Activated naive CD4-positive, alpha-beta T cell treated with anti-CD3 and anti-CD28 coated beads, Interleukin-2, amount 10 ng/mL, durations not matched to agents 7 days and 5 days (primary cell): ENCODE measurements at regions of chr2 and their contacts with region 1.

Region 1: DNA sequence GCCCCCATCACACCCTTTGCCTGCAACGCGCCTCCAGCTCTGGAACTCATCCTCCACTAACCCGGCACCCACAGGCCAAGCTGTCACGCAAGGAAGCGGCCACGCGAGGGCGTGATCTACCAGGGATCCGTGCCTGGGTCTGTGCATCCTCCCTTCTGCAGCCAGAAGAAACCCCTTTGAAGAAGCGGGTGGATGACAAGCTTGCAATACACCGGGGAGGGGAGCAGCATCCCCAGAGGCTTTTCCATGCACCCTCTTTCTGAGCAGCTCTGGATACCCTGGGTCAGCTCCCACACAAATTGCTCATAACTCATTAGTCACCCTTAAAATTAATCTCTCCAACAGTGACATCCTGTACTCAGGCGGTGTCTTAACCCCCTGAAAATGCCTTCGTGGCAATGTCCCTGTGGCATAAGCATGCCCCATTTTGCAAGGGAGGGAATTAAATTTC is 47.6 kb downstream of the PDCL3 start:
- DNase-seq: peak; percentile 89
- H3K4me3 Mint-ChIP-seq: no peak overlapping the region
- H3K27ac Mint-ChIP-seq: no peak overlapping the region
- H3K4me1 Mint-ChIP-seq: peaks cover 4% of the 10 kb centered on the region
- H3K27me3 Mint-ChIP-seq: peaks cover 36% of the 10 kb centered on the region

Region 2: DNA sequence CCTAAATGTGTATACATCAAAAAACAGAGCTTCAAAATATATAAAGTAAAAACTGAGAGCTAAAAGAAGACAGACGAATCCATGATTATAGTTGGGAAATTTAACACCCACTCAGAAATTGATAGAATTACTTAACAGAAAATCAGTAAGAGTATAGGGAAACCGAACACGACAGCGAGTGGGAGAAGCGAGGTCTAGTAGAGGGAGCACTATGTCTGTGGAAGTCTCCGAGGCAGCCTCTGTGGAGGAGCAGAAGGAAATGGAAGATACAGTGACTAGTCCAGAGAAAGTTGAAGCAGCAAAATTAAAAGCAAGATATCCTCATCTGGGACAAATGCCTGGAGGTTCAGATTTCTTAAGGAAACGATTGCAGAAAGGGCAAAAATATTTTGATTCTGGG is 101.3 kb before region 1 on chr2:
- CTCF ChIA-PET with region 1: no interaction called
- DNase-seq: no peak
- H3K4me3 Mint-ChIP-seq: no peak overlapping the region
- H3K27ac Mint-ChIP-seq: no peak overlapping the region
- H3K4me1 Mint-ChIP-seq: no peaks in the 10 kb centered on the region
- H3K27me3 Mint-ChIP-seq: peaks cover 4% of the 10 kb centered on the region

Region 3: GRCh38 chr2:100592226-100592625 is 18.2 kb before region 1 on chr2:
- CTCF ChIA-PET with region 1: interaction called, 13 read pairs
- DNase-seq: no peak
- H3K4me3 Mint-ChIP-seq: no peak overlapping the region
- H3K27ac Mint-ChIP-seq: no peak overlapping the region
- H3K4me1 Mint-ChIP-seq: peaks cover 43% of the 10 kb centered on the region
- H3K27me3 Mint-ChIP-seq: peaks cover 20% of the 10 kb centered on the region

Region 4: GRCh38 chr2:100630473-100630977 is 20.1 kb after region 1 on chr2:
- CTCF ChIA-PET with region 1: interaction called, 46 read pairs
- DNase-seq: peak; percentile 56
- H3K4me3 Mint-ChIP-seq: peak overlapping the region; percentile 3
- H3K27ac Mint-ChIP-seq: peak overlapping the region; percentile 53
- H3K4me1 Mint-ChIP-seq: peaks cover 23% of the 10 kb centered on the region
- H3K27me3 Mint-ChIP-seq: peaks cover 32% of the 10 kb centered on the region

Region 5: DNA sequence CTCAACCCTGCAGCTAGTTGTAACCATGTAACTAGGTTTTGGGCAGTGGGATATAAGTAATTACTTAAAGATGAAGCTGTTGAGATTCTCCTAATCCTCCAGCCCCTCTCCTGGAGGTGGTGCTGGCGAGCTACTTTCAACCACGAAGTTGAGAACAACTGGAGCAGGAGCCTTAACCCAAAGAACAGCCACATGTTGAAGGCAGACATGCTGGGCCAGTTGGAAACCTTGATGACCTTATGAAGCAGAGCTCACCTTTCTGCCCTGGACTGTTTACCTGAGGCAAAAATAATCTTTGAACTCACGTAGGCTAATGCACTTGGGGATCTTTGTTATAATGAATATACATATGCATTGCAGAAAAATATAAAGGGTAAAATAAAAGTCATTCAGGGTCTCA is 119.9 kb after region 1 on chr2:
- CTCF ChIA-PET with region 1: interaction called, 11 read pairs
- DNase-seq: peak; percentile 74
- H3K4me3 Mint-ChIP-seq: no peak overlapping the region
- H3K27ac Mint-ChIP-seq: no peak overlapping the region
- H3K4me1 Mint-ChIP-seq: no peaks in the 10 kb centered on the region
- H3K27me3 Mint-ChIP-seq: peaks cover 21% of the 10 kb centered on the region

Region 6: GRCh38 chr2:100891911-100892642 is 281.7 kb after region 1 on chr2:
- CTCF ChIA-PET with region 1: no interaction called
- DNase-seq: no peak
- H3K4me3 Mint-ChIP-seq: no peak overlapping the region
- H3K27ac Mint-ChIP-seq: no peak overlapping the region
- H3K4me1 Mint-ChIP-seq: no peaks in the 10 kb centered on the region
- H3K27me3 Mint-ChIP-seq: no peaks in the 10 kb centered on the region

Region 7: GRCh38 chr2:100984892-100985379 is 374.5 kb after region 1 on chr2:
- CTCF ChIA-PET with region 1: interaction called, 84 read pairs
- DNase-seq: peak; percentile 86
- H3K4me3 Mint-ChIP-seq: no peak overlapping the region
- H3K27ac Mint-ChIP-seq: no peak overlapping the region
- H3K4me1 Mint-ChIP-seq: no peaks in the 10 kb centered on the region
- H3K27me3 Mint-ChIP-seq: no peaks in the 10 kb centered on the region